ENCODE measurements at regions of chr6 and their contacts with region 1.

Region 1: GRCh38 chr6:142946181-142946923 is 1.4 kb upstream of the HIVEP2 start:
- DNase-seq: peak; percentile 91 to 99 (median 96)

Region 2: DNA sequence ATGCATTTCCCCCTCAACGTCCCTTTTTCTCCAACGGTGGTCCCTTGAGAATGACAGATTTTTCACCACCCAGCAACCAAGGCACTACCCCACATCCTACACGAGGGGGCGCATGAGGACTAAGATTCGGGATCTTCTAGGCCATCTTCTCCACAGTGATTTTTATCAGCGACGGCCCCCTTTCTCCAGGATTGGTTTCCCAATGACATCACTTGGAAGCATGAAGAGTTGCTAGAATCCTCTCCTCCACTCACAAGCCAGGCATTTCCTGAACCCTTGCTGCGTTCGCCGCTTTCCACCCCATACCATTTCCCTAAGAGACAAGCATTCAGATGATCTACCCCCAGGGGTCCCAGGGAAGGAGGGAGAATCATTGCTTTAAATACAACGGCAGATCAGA is 253.4 kb before region 1 on chr6:
- intact Hi-C with region 1: loop called (anchors 5 kb)
- DNase-seq: peak in 8 of 10 donors; percentile 58 to 91 (median 72)

Region 3: GRCh38 chr6:142845624-142846458 is 100.5 kb before region 1 on chr6:
- intact Hi-C with region 1: loop called (anchors 1 kb)
- DNase-seq: peak; percentile 59 to 95 (median 74)

Region 4: GRCh38 chr6:142885182-142885867 is 61.0 kb before region 1 on chr6:
- intact Hi-C with region 1: loop called (anchors 5 kb)
- DNase-seq: no peak

Region 5: DNA sequence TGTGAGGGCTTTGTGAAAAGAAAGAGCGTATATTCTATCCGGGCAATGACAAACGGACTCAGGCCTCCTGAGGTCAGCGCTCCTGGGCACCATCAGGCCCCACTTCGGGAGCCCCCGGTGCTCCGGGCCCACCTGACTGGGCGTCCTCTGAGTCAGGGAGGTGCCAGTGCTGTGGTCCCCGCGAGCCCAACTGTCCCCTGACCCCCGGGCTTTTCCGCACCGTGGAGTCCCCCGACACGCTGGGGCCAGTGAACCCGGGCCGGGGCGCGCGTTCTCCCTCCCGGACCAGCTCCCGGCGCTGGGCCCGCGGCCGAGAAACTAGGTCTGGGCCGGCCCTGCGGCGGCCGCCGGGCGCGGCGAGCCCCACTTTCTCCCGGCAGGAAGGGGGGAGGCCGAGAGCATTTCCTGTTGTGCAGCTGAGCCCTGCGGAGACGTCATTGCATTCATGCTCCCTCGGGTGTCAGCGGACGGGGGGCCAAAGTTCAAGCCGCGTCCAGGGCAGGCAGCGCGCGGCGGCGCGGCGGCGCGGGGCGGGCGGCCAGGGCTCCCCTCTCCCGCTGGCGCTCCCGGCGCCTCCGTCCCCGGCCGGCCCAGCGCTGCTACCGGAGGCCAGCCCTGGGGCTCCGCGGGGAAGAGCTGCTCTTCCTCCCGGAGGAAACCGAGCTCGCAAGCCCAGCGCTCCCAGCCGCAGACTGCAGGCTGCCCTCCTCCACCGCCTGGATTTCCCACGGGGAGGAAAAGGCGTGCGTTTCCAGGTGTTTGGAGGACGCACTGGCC is 19.7 kb before region 1 on chr6:
- intact Hi-C with region 1: loop called (anchors 1 kb)
- DNase-seq: peak; percentile 68 to 97 (median 83)

Region 6: GRCh38 chr6:143060354-143060805 is 114.0 kb after region 1 on chr6:
- intact Hi-C with region 1: loop called (anchors 2 kb)
- DNase-seq: peak; percentile 56 to 96 (median 75)

Measured in posterior cingulate gyrus (tissue), 11 donors.